ENCODE measurements at regions of chr12 and their contacts with region 1.

Region 1: DNA sequence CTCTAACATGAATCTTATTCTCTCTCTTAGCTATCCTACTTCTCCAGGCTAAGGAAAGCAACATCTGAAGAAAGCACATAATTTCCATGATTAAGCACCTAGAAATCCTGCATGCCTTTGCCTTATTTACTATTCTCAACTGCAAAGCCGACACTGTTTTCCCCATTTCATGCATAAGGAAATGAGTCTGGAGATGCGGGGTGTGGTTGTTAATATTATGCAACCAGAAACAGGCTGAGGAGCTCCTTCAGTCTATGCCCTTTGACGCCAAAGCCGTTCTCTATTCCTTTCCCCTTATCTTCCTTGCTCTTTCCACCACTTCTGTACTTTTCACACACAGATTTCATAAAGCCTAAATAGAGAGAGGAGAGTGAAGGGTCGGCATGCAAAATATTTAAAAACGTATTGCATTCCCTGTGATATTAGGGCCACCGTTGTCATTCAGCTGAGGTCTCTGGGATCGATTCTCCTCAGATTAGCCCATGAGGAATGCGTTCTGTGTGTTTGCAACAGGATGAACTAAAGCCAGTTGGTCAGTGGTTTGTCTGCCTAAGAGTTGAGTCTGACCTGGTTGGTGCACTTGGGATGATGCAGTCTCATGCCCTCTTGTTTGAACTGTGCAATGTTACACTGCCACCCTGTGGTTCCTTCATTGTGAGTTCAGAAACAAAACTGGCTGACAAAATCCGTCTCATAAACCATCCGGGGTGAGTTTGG is 53.1 kb upstream of the PLEKHG7 start:
- DNase-seq: no peak
- H3K4me3 ChIP-seq: no peak overlapping the region
- H3K27ac ChIP-seq: no peak overlapping the region
- H3K4me1 ChIP-seq: peaks cover 0 to 3% (median under 1%) of the 10 kb centered on the region in 4 donors
- H3K27me3 ChIP-seq: no peaks in the 10 kb centered on the region
- CTCF ChIP-seq: peak; percentile 41 to 60 (median 52)
- EP300 ChIP-seq: no peak
- POLR2A ChIP-seq: no peak

Region 2: DNA sequence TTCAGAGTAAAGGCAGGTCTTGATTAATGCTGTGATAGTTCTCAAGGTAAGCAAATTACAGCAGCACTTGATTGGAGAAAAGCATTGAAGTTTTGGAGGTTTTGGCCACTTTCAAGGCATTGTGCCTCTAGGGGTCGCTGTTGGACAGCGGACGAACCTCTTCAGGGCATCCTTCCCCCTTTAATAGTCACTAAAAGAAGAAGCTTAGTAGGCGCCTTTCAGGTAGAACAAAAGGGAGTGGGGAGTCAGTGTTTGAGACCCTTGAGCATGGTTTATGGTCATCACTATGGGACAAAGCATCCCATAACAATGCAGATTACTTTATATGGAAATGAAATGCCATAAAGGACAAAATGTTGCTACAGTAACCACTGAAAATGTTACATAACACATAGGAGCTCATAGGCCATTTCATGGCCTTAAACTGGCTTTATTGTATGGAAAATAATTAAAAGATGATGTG is 1267.6 kb before region 1 on chr12:
- intact Hi-C with region 1: loop called (anchors 10 kb)
- DNase-seq: no peak
- H3K4me3 ChIP-seq: peak overlapping the region; percentile 42 to 58 (median 48)
- H3K27ac ChIP-seq: peak overlapping the region; percentile 35 to 59 (median 55)
- H3K4me1 ChIP-seq: peaks cover 0 to 7% (median 6%) of the 10 kb centered on the region in 4 donors
- H3K27me3 ChIP-seq: no peaks in the 10 kb centered on the region
- CTCF ChIP-seq: peak; percentile 77 to 83 (median 82)
- EP300 ChIP-seq: no peak
- POLR2A ChIP-seq: no peak

Region 3: GRCh38 chr12:92144045-92144630 is 505.5 kb before region 1 on chr12:
- intact Hi-C with region 1: no loop called
- DNase-seq: peak; percentile 95
- H3K4me3 ChIP-seq: peak overlapping the region; percentile 77 to 97 (median 91)
- H3K27ac ChIP-seq: peak overlapping the region; percentile 99
- H3K4me1 ChIP-seq: peaks cover 0 to 27% (median 18%) of the 10 kb centered on the region in 4 donors
- H3K27me3 ChIP-seq: no peaks in the 10 kb centered on the region
- CTCF ChIP-seq: peak; percentile 61 to 82 (median 75)
- EP300 ChIP-seq: no peak
- POLR2A ChIP-seq: no peak

Region 4: GRCh38 chr12:92445253-92446082 is 204.2 kb before region 1 on chr12:
- intact Hi-C with region 1: no loop called
- DNase-seq: no peak
- H3K4me3 ChIP-seq: no peak overlapping the region
- H3K27ac ChIP-seq: peak overlapping the region; percentile 20 to 43 (median 32)
- H3K4me1 ChIP-seq: peaks cover 0 to 12% (median 11%) of the 10 kb centered on the region in 4 donors
- H3K27me3 ChIP-seq: no peaks in the 10 kb centered on the region
- CTCF ChIP-seq: no peak
- EP300 ChIP-seq: no peak
- POLR2A ChIP-seq: no peak

Region 5: DNA sequence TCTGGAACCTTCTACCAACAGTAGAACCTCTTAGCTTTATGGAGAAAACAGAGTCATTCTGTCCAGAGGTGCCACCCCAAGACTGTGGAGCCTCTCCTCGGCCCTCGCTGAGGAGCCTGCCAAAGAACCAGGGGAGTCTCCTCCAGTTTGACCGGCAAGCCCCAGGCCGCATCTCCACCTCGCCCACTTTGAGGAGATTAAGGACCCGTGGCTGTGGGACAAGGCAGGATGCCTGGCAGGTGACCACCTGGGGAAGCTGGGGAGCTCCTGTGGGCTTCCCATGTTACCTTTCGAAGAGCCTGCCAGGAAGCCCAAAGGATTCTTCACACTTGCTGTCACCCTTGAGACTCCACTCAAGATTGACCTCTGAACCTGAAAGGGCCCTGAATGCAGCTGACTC is 56.9 kb after region 1 on chr12:
- intact Hi-C with region 1: no loop called
- DNase-seq: no peak
- H3K4me3 ChIP-seq: no peak overlapping the region
- H3K27ac ChIP-seq: no peak overlapping the region
- H3K4me1 ChIP-seq: no peaks in the 10 kb centered on the region
- H3K27me3 ChIP-seq: no peaks in the 10 kb centered on the region
- CTCF ChIP-seq: no peak
- EP300 ChIP-seq: no peak
- POLR2A ChIP-seq: no peak